ENCODE measurements at regions of chr7 and their contacts with region 1.

Region 1: GRCh38 chr7:139771001-139771970 is 6.5 kb downstream of the HIPK2 start:
- DNase-seq: no peak
- ATAC-seq: no peak
- H3K4me3 ChIP-seq: no peak overlapping the region
- H3K27ac ChIP-seq: no peak overlapping the region
- H3K4me1 ChIP-seq: peaks cover 30% of the 10 kb centered on the region
- H3K27me3 ChIP-seq: no peaks in the 10 kb centered on the region

Region 2: DNA sequence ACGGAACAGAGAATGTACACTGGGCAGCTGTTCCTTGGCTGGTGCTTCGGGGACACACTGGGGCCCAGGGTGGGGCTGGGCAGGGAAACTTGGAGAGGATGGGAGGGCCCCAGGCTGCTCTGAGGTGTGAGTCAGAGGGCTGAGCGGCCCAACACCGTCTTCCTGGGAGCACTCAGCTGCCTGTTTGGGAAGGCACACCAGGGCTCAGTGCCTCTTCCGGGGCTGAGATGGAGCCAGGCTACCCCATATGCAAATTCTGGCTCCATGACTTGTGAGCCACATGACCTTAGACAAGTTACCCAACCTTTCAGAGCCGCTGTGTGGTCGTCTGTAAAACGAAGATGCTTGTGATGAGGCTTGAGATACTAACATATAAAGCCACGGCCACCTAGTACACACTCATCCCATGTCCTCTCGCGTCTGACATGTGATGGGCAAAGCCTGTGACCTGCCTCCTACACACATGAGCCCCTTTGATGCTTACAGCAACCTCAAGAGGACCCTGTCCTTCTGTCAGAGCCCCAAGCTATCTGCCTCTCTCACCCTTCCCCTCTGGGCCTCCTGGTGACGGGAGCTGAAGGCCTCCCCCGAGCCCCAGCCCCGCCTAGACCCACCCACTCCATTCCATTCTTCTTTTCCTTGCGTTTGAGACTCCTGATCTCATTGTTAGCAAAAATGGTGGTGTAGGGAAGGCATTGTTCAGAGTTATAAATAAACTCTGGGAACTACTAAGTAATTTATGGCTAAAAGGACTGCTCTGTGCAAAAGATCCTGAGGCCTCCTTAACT is 313.9 kb before region 1 on chr7:
- intact Hi-C with region 1: no loop called
- DNase-seq: no peak
- ATAC-seq: peak in 1 of 2 donors; percentile 12
- H3K4me3 ChIP-seq: no peak overlapping the region
- H3K27ac ChIP-seq: no peak overlapping the region
- H3K4me1 ChIP-seq: no peaks in the 10 kb centered on the region
- H3K27me3 ChIP-seq: no peaks in the 10 kb centered on the region

Region 3: GRCh38 chr7:139667377-139667776 is 103.9 kb before region 1 on chr7:
- intact Hi-C with region 1: no loop called
- DNase-seq: no peak
- ATAC-seq: no peak
- H3K4me3 ChIP-seq: no peak overlapping the region
- H3K27ac ChIP-seq: no peak overlapping the region
- H3K4me1 ChIP-seq: peaks cover 14% of the 10 kb centered on the region
- H3K27me3 ChIP-seq: no peaks in the 10 kb centered on the region

Region 4: GRCh38 chr7:139737221-139738100 is 33.8 kb before region 1 on chr7:
- intact Hi-C with region 1: loop called in 2 of 4 experiments (anchors 5 kb)
- DNase-seq: no peak
- ATAC-seq: peak in 1 of 2 donors; percentile 57
- H3K4me3 ChIP-seq: no peak overlapping the region
- H3K27ac ChIP-seq: peak overlapping the region; percentile 96
- H3K4me1 ChIP-seq: peaks cover 54% of the 10 kb centered on the region
- H3K27me3 ChIP-seq: no peaks in the 10 kb centered on the region

Region 5: DNA sequence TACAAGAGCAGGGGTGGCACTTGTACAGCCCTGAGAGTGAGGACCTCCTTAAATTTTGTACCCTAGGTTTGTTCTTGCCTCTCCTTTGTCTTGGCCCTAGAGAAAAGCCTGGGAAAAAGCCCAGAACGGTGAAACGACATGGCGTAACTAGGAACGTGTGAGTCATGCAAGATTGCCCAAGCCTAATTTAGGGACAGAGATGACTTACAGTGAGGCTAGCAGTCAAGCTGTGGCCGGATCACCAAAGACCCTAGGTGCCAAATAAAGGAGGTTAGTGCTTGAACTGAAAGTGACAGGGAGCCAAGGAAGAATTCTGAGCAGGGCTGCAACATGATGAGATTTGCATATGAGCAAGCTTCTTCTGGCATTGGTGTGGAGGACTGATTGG is 82.8 kb after region 1 on chr7:
- intact Hi-C with region 1: no loop called
- DNase-seq: peak in 1 of 3 donors; percentile 36
- ATAC-seq: peak in 1 of 2 donors; percentile 65
- H3K4me3 ChIP-seq: no peak overlapping the region
- H3K27ac ChIP-seq: no peak overlapping the region
- H3K4me1 ChIP-seq: no peaks in the 10 kb centered on the region
- H3K27me3 ChIP-seq: no peaks in the 10 kb centered on the region

Measured in right cardiac atrium (tissue), 5 donors.